ENCODE measurements at regions of chr5 and their contacts with region 1.

Region 1: DNA sequence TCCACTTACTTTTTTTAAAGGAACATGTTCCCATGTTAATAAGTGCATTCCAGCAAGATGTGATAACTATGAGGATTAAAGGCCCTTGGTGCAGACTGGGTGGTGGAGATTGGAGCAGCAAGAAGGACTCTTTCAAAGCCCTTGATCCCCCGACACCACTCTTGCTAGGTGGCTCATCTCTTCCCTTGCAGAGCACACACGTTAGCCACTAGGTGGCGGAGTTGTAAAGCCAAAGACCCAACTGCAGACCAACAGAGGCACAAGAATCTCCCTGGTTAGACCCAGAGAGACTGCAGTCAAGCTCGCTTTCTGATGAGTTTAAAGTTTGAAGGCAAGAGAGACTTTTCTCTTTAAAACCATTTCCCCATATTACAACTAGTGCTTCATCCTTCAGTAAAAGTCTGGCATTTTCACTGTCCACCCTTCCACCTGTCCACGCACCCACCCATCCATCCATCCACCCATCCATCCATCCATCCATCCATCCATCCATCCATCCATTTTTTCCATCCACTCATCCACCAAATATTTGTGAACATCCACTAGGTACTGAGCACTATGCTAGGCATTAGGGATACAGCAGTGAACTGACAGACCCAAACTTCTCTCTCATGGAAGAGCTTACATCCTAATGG is 226.9 kb downstream of the MSX2 start:
- DNase-seq: peak; percentile 75
- H3K4me3 Mint-ChIP-seq: no peak overlapping the region
- H3K27ac Mint-ChIP-seq: no peak overlapping the region
- H3K4me1 Mint-ChIP-seq: no peaks in the 10 kb centered on the region
- H3K27me3 Mint-ChIP-seq: peaks cover 25% of the 10 kb centered on the region
- CTCF ChIP-seq: peak; percentile 81

Region 2: DNA sequence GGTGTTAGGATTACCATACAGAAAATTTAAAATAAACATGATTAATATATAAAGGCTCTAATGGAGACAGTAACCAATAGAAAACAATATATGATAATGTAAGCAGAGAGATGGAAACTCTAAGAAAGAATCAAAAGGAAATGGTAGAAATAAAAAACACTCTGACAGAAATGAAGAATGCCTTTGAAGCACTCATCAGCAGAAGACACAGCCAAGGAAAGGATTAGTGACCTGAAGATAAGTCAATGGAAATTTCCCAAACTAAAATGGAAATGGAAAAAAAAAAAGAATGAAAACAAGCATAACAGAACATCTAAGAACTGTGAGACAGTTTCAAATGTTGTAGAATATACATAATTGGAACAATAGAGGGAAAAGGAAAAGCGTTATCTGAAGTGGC is 190.2 kb after region 1 on chr5:
- CTCF ChIA-PET with region 1: no interaction called
- intact Hi-C with region 1: loop called (anchors 5 kb)
- DNase-seq: no peak
- H3K4me3 Mint-ChIP-seq: no peak overlapping the region
- H3K27ac Mint-ChIP-seq: no peak overlapping the region
- H3K4me1 Mint-ChIP-seq: no peaks in the 10 kb centered on the region
- H3K27me3 Mint-ChIP-seq: no peaks in the 10 kb centered on the region
- CTCF ChIP-seq: no peak

Region 3: GRCh38 chr5:175444060-175444904 is 493.0 kb after region 1 on chr5 and contains the start of gene DRD1:
- CTCF ChIA-PET with region 1: interaction called, 3 read pairs
- intact Hi-C with region 1: loop called (anchors 1 kb)
- DNase-seq: peak; percentile 79
- H3K4me3 Mint-ChIP-seq: peak within 1 kb of the TSS; percentile 51
- H3K27ac Mint-ChIP-seq: no peak within 1 kb of the TSS
- H3K4me1 Mint-ChIP-seq: peaks cover 7% of the 10 kb centered on the region
- H3K27me3 Mint-ChIP-seq: peaks cover 70% of the 10 kb centered on the region
- CTCF ChIP-seq: peak; percentile 77
- total RNA-seq, gene DRD1: not detected in 2 replicates

Region 4: DNA sequence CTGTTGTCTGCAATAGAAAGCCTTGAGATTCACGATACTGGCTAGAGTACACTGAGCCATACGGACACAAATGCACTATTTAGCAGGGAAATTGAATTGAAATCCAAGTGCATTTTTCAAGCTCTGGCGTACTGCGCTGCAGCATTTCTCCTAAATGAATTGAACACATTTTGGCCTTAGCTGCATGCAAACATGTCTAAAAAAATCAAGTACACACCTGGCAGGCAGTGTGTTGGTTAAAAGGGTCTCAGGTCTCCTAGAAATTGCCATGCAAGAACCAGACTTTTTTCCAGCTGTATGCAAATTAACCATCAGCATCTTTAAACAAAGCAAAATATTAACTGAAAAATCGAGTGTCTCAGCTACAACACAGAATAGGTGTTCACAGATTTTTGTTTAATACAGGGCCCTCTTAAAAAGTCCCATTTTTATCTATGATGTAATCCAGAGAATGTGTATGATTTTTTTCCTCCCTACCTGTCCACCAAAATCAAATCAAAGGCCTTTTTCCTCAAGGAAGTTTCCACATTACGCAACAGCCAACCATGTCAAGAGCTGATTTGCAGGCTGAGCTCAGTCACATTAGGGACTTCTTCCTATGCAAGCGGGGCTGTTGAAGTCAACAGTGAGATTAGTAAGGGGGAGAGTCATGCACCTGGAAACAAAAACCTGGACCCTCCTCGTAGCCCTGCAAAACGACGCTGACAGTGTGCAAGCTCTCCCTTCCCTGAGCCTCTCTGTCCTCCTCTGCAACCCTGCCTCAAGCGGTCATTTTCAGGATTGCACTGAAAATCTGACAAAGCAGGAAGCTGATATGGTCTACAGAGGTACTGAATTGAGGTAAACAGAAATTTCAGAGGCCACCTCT is 513.0 kb after region 1 on chr5:
- CTCF ChIA-PET with region 1: no interaction called
- intact Hi-C with region 1: loop called (anchors 5 kb)
- DNase-seq: peak; percentile 78
- H3K4me3 Mint-ChIP-seq: no peak overlapping the region
- H3K27ac Mint-ChIP-seq: no peak overlapping the region
- H3K4me1 Mint-ChIP-seq: no peaks in the 10 kb centered on the region
- H3K27me3 Mint-ChIP-seq: peaks cover 38% of the 10 kb centered on the region
- CTCF ChIP-seq: peak; percentile 68

Region 5: GRCh38 chr5:175718401-175719108 is 767.3 kb after region 1 on chr5:
- CTCF ChIA-PET with region 1: no interaction called
- intact Hi-C with region 1: loop called (anchors 5 kb)
- DNase-seq: peak; percentile 56
- H3K4me3 Mint-ChIP-seq: no peak overlapping the region
- H3K27ac Mint-ChIP-seq: no peak overlapping the region
- H3K4me1 Mint-ChIP-seq: no peaks in the 10 kb centered on the region
- H3K27me3 Mint-ChIP-seq: peaks cover 35% of the 10 kb centered on the region
- CTCF ChIP-seq: peak; percentile 44

Measured in Calu3 (cell line).